ENCODE measurements at regions of chr10 and their contacts with region 1.

Region 1: DNA sequence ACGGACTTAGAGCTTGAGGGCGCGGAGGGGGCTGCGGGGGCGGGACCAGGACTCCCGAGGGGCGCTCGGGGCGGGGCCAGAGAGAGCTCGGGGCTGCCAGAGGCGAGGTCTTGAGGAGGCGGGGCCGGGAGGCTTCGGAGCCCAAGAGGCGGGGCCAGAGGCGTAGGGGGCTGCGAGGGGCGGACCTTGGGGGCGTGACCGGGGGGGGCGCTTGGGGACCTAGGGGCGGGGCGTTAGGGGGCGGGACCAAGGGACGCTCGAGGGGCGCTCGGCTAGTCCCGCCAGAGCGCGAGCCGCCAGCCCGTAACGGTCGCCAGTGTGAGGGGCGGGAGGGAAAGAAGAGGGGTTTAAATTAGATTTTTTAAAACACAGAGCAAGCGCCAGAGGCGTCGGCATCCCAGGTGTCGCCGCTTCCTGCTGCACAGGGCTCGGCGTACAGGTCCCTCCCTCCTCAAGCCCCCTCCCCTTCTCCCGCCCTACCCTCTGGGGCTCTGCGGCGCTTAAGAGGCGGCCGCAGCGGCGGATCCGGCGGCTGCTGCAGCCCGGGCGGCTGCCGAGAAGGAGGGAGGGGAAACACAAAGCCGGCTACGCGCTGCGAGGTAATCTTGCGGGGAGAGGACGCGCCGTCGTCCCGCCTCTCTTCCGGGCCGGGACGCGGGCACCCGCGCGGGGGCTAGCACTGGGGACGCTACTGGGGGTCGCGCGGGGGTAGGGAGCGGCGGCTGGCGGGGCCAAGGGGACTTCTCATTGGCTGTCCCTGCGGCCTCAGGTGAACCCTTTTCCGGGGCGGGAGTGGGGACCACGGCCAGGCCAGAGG is at the start of gene ADD3:
- DNase-seq: peak; percentile 91
- H3K4me3 ChIP-seq: peak within 1 kb of the TSS; percentile 71 to 99 (median 88)
- H3K27ac ChIP-seq: peak within 1 kb of the TSS; percentile 30
- H3K4me1 ChIP-seq: peaks cover 18% of the 10 kb centered on the region
- H3K27me3 ChIP-seq: peaks cover 0 to 4% of the 10 kb centered on the region in 2 experiments
- CTCF ChIP-seq: no peak
- POLR2A ChIP-seq: peak; percentile 57
- total RNA-seq, gene ADD3: 52.3 and 55.2 TPM in 2 replicates

Region 2: DNA sequence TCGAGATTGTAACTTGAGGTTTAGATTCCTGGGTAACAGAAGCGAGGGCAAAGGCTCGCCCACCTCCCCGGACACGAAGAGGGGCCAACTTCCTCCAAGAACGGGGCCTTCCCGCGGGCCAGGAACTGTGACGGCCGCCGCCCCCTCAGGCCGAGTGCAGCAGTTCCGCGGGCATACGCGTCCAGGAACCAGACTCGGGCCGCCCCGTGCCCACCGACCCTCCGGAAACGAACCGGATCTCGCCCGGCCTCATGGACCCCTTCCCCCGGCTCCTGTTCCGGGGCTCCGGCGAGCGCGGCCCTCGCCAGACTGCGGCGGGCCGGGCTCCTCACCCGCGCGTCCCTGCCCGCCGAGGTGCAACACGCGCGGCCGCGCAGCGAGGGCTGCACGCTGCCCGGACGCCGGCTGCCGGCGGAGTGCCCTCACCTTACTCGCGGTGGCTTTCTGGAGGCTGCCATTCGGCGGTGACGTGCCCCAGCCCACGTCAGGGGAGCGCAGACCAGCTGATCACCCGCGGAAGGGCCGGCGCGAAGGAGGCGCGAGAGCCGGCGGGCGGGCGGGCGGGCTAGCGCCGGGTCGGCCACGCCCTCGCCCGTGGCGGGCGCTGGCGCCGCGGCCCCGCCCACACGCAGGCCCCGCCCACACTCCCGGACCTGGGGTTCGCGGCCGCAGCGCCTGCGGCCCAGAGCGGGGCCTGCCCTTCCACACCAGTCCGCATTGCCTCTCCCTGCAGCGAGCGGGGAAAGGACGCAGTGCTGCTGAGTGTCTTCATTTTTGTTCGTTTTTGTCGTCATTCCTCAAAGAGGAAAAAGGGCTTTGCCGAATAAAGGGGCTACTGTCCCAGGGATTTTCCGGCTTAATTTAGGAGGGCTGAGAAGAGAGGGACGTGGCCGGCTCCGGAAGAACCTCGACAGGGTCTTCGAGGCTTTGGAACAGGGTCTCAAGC is 84.7 kb before region 1 on chr10 and contains the start of gene XPNPEP1:
- CTCF ChIA-PET with region 1: no interaction called
- POLR2A ChIA-PET with region 1: no interaction called
- dilution Hi-C with region 1: no loop called
- intact Hi-C with region 1: loop called (anchors 2 kb)
- DNase-seq: peak; percentile 86
- H3K4me3 ChIP-seq: peak within 1 kb of the TSS; percentile 58 to 91 (median 80)
- H3K27ac ChIP-seq: peak within 1 kb of the TSS; percentile 92
- H3K4me1 ChIP-seq: peaks cover 12% of the 10 kb centered on the region
- H3K27me3 ChIP-seq: no peaks in the 10 kb centered on the region
- CTCF ChIP-seq: peak in 1 of 2 donors; percentile 4
- POLR2A ChIP-seq: peak; percentile 91
- total RNA-seq, gene XPNPEP1: 81.1 and 87.3 TPM in 2 replicates

Region 3: GRCh38 chr10:109966961-109967738 is 40.8 kb before region 1 on chr10:
- CTCF ChIA-PET with region 1: interaction called, 4 read pairs
- POLR2A ChIA-PET with region 1: no interaction called
- dilution Hi-C with region 1: no loop called
- intact Hi-C with region 1: loop called (anchors 2 kb)
- DNase-seq: peak; percentile 87
- H3K4me3 ChIP-seq: peak overlapping the region in 2 of 3 experiments; percentile 4 to 23
- H3K27ac ChIP-seq: peak overlapping the region; percentile 66
- H3K4me1 ChIP-seq: peaks cover 33% of the 10 kb centered on the region
- H3K27me3 ChIP-seq: no peaks in the 10 kb centered on the region
- CTCF ChIP-seq: no peak
- POLR2A ChIP-seq: no peak

Region 4: DNA sequence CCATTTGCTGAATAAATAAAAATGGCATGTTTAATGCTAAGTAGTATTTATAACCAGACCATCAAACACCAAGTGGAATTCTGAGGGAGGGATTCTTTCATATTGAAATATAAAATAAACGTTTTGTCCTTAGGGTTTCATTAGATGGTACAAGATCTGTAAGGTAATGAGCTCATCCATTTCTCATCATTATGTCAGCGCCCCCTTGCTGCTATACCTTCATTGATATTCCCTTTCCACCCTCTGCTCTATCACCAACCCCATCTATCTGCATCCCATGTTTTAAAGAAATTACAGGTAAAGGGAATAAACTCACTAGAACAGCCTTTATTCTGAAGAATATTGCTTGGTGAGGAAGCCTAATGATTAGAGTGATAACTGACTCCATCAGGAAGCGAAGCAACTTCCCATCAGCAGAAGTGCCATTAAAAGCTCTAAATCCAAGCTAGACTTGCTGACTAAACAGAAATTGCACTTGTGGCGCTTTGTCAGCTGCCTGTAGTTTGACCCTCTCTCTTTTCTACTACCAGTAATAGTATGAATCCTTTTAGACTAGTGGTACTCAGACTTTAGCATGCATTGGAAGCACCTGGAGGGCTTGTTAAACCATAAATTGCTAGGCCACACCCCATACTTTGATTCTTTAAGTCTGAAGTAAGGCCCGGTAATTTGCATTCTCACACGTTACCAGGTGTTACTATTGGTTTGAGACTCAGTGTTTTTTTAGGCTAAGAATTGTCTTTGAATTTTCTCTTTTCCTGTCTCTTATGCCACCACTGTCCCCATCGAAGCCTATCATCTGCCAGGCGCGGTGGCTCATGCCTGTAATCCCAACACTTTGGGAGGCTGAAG is 27.4 kb after region 1 on chr10:
- CTCF ChIA-PET with region 1: interaction called, 4 read pairs
- POLR2A ChIA-PET with region 1: no interaction called
- dilution Hi-C with region 1: no loop called
- intact Hi-C with region 1: loop called (anchors 2 kb)
- DNase-seq: no peak
- H3K4me3 ChIP-seq: no peak overlapping the region
- H3K27ac ChIP-seq: no peak overlapping the region
- H3K4me1 ChIP-seq: peaks cover 21% of the 10 kb centered on the region
- H3K27me3 ChIP-seq: no peaks in the 10 kb centered on the region
- CTCF ChIP-seq: no peak
- POLR2A ChIP-seq: no peak

Region 5: GRCh38 chr10:110076559-110077318 is 68.8 kb after region 1 on chr10:
- CTCF ChIA-PET with region 1: interaction called, 3 read pairs
- POLR2A ChIA-PET with region 1: interaction called, 4 read pairs
- dilution Hi-C with region 1: no loop called
- intact Hi-C with region 1: loop called (anchors 1 kb)
- DNase-seq: peak; percentile 91
- H3K4me3 ChIP-seq: peak overlapping the region in 1 of 3 experiments; percentile 23
- H3K27ac ChIP-seq: peak overlapping the region; percentile 83
- H3K4me1 ChIP-seq: peaks cover 53% of the 10 kb centered on the region
- H3K27me3 ChIP-seq: no peaks in the 10 kb centered on the region
- CTCF ChIP-seq: no peak
- POLR2A ChIP-seq: no peak

Region 6: GRCh38 chr10:110137142-110137545 is 129.2 kb after region 1 on chr10:
- CTCF ChIA-PET with region 1: interaction called, 4 read pairs
- POLR2A ChIA-PET with region 1: no interaction called
- dilution Hi-C with region 1: no loop called
- intact Hi-C with region 1: loop called (anchors 1 kb)
- DNase-seq: peak; percentile 74
- H3K4me3 ChIP-seq: no peak overlapping the region
- H3K27ac ChIP-seq: no peak overlapping the region
- H3K4me1 ChIP-seq: peaks cover 14% of the 10 kb centered on the region
- H3K27me3 ChIP-seq: no peaks in the 10 kb centered on the region
- CTCF ChIP-seq: peak; percentile 49 to 53
- POLR2A ChIP-seq: no peak

Region 7: DNA sequence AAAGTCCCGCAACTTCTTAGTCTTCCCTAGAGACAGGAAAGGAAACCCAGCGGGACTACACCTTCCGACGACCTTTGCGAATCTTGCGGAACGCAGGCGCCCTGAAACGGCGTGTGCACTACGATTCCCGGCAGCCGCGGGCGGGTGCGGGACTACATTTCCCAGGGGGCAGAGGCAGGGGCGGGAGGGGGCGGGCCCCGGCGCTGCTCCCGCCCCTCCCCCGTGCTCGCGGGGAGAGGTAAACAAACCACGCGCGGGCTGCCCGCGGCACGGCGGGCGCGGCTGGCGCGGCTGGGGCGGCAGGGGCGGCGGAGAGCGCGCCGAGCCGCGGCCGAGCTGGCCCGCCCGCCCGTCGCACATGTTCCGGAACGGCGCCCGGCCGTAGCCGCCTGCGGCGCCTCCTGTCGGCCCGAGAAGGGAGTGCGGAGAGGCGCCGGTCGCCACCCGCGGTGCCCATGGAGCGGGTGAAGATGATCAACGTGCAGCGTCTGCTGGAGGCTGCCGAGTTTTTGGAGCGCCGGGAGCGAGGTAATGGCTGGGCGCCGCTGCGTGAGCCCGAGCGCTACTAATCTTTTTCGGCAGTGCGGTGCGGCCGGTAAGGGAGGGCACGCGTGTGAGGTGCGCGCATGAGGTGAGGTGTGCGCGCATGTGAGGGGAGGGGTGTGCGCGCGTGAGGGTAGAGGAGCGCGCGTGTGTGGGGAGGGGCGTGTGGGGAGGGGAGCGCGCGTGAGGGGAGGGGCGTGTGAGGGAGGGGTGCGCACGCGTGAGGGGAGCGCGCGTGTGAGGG is 218.0 kb after region 1 on chr10:
- CTCF ChIA-PET with region 1: no interaction called
- POLR2A ChIA-PET with region 1: no interaction called
- dilution Hi-C with region 1: no loop called
- intact Hi-C with region 1: loop called (anchors 1 kb)
- DNase-seq: peak; percentile 89
- H3K4me3 ChIP-seq: peak overlapping the region; percentile 74 to 92 (median 75)
- H3K27ac ChIP-seq: no peak overlapping the region
- H3K4me1 ChIP-seq: peaks cover 8% of the 10 kb centered on the region
- H3K27me3 ChIP-seq: no peaks in the 10 kb centered on the region
- CTCF ChIP-seq: peak; percentile 54 to 79
- POLR2A ChIP-seq: no peak

Measured in endothelial cell of umbilical vein (primary cell).